ENCODE measurements at regions of chr1 and their contacts with region 1.

Region 1: GRCh38 chr1:243539636-243540035 is 283.8 kb downstream of the SDCCAG8 start:
- DNase-seq: no peak
- ATAC-seq: no peak
- H3K4me3 ChIP-seq: no peak overlapping the region
- H3K4me3 Mint-ChIP-seq: no peak overlapping the region
- H3K27ac ChIP-seq: no peak overlapping the region
- H3K27ac Mint-ChIP-seq: no peak overlapping the region
- H3K4me1 ChIP-seq: no peaks in the 10 kb centered on the region
- H3K4me1 Mint-ChIP-seq: no peaks in the 10 kb centered on the region
- H3K27me3 ChIP-seq: no peaks in the 10 kb centered on the region
- H3K27me3 Mint-ChIP-seq: no peaks in the 10 kb centered on the region
- CTCF ChIP-seq: no peak

Region 2: GRCh38 chr1:243553090-243553489 is 13.5 kb after region 1 on chr1:
- CTCF ChIA-PET with region 1: no interaction called
- POLR2A ChIA-PET with region 1: interaction called, 4 read pairs
- intact Hi-C with region 1: loop called in 1 of 2 experiments (anchors 2 kb)
- DNase-seq: no peak
- ATAC-seq: no peak
- H3K4me3 ChIP-seq: no peak overlapping the region
- H3K4me3 Mint-ChIP-seq: no peak overlapping the region
- H3K27ac ChIP-seq: no peak overlapping the region
- H3K27ac Mint-ChIP-seq: no peak overlapping the region
- H3K4me1 ChIP-seq: no peaks in the 10 kb centered on the region
- H3K4me1 Mint-ChIP-seq: peaks cover 2% of the 10 kb centered on the region
- H3K27me3 ChIP-seq: no peaks in the 10 kb centered on the region
- H3K27me3 Mint-ChIP-seq: no peaks in the 10 kb centered on the region
- CTCF ChIP-seq: no peak